ENCODE measurements at regions of chr13 and their contacts with region 1.

Region 1: GRCh38 chr13:99176309-99177276 is 24.1 kb upstream of the UBAC2 start:
- DNase-seq: peak; percentile 58
- ATAC-seq: peak; percentile 98
- H3K4me3 ChIP-seq: peak overlapping the region in 1 of 3 experiments; percentile 33; a peak in 1 of 6 replicates
- H3K27ac ChIP-seq: no peak overlapping the region
- H3K4me1 ChIP-seq: peaks cover 7% of the 10 kb centered on the region; the same call in 1 of the 2 replicates
- H3K27me3 ChIP-seq: peaks cover 0 to 10% of the 10 kb centered on the region in 2 experiments; a peak in 1 of 5 replicates
- CTCF ChIP-seq: peak; percentile 97
- EP300 ChIP-seq: no peak
- POLR2A ChIP-seq: no peak
- RAD21 ChIP-seq: peak; percentile 86

Region 2: DNA sequence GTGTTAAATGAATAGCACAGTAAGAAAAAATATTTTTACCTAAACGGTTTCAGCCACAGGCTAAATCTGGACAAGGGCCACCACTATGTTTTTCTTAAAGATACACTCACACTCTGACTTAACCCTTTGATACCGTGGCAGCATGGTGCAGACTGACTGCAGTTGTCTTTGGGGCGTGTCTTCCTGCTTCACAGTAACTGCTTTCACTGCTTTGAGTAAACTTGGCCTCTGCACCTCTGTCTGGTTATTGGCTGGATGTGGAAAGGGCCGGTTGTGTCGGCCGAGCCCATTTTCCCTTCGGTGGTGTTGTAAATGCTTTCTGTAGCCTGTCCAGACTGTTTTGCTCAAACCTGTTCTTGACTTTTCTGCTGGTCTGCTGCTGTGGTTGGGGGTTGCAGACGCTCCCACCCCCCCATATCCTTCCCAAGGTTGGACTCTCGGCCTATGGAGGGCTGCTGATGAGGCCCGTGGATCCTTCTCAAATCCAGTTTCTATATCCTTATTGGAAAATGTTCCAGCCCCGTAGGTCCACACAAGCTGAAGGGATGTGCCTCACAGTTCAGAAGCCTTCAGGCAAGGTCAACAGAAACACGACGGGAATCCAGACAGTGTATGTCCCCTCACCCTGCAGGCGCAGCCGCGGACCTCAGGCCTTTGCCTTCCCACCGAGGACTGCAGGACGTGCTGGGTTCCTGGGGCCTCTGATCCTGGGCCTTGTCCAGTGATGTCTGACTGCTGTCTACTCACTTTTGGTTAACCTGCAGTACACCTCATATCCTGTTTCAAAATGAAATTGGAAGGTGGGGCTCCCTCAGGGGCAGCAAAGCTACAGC is 909.3 kb before region 1 on chr13:
- CTCF ChIA-PET with region 1: no interaction called
- POLR2A ChIA-PET with region 1: no interaction called
- in situ Hi-C with region 1: no loop called
- intact Hi-C with region 1: no loop called
- DNase-seq: peak; percentile 94
- ATAC-seq: peak; percentile 76
- H3K4me3 ChIP-seq: peak overlapping the region; percentile 35 to 65 (median 41)
- H3K27ac ChIP-seq: peak overlapping the region; percentile 80
- H3K4me1 ChIP-seq: peaks cover 98% of the 10 kb centered on the region
- H3K27me3 ChIP-seq: no peaks in the 10 kb centered on the region
- CTCF ChIP-seq: no peak; the same call in 1 of the 2 replicates
- EP300 ChIP-seq: peak in 1 of 2 experiments; percentile 81; a peak in 2 of 4 replicates
- POLR2A ChIP-seq: peak; percentile 66 to 68
- RAD21 ChIP-seq: no peak

Region 3: GRCh38 chr13:99191879-99192399 is 15.3 kb after region 1 on chr13:
- CTCF ChIA-PET with region 1: no interaction called
- POLR2A ChIA-PET with region 1: no interaction called
- in situ Hi-C with region 1: no loop called
- intact Hi-C with region 1: no loop called
- DNase-seq: no peak
- ATAC-seq: peak; percentile 16; the same call in 2 of the 3 replicates
- H3K4me3 ChIP-seq: no peak overlapping the region
- H3K27ac ChIP-seq: no peak overlapping the region
- H3K4me1 ChIP-seq: peaks cover 23% of the 10 kb centered on the region; the same call in 1 of the 2 replicates
- H3K27me3 ChIP-seq: no peaks in the 10 kb centered on the region; a peak in 1 of 5 replicates
- CTCF ChIP-seq: no peak
- EP300 ChIP-seq: no peak
- POLR2A ChIP-seq: no peak
- RAD21 ChIP-seq: no peak

Region 4: GRCh38 chr13:99264051-99264450 is 87.5 kb after region 1 on chr13:
- CTCF ChIA-PET with region 1: interaction called, 22 read pairs
- POLR2A ChIA-PET with region 1: no interaction called
- in situ Hi-C with region 1: loop called (anchors 5 kb)
- intact Hi-C with region 1: loop called (anchors 1 kb)
- DNase-seq: no peak
- ATAC-seq: no peak
- H3K4me3 ChIP-seq: no peak overlapping the region
- H3K27ac ChIP-seq: no peak overlapping the region
- H3K4me1 ChIP-seq: peaks cover 30% of the 10 kb centered on the region
- H3K27me3 ChIP-seq: no peaks in the 10 kb centered on the region
- CTCF ChIP-seq: no peak
- EP300 ChIP-seq: no peak
- POLR2A ChIP-seq: no peak
- RAD21 ChIP-seq: no peak

Region 5: GRCh38 chr13:99269627-99270241 is 93.1 kb after region 1 on chr13:
- CTCF ChIA-PET with region 1: interaction called, 22 read pairs
- POLR2A ChIA-PET with region 1: no interaction called
- in situ Hi-C with region 1: loop called (anchors 5 kb)
- intact Hi-C with region 1: loop called (anchors 1 kb)
- DNase-seq: peak; percentile 25
- ATAC-seq: peak; percentile 71
- H3K4me3 ChIP-seq: no peak overlapping the region
- H3K27ac ChIP-seq: no peak overlapping the region
- H3K4me1 ChIP-seq: no peaks in the 10 kb centered on the region
- H3K27me3 ChIP-seq: no peaks in the 10 kb centered on the region
- CTCF ChIP-seq: peak; percentile 58
- EP300 ChIP-seq: no peak
- POLR2A ChIP-seq: no peak
- RAD21 ChIP-seq: no peak; the same call in 1 of the 2 replicates

Region 6: DNA sequence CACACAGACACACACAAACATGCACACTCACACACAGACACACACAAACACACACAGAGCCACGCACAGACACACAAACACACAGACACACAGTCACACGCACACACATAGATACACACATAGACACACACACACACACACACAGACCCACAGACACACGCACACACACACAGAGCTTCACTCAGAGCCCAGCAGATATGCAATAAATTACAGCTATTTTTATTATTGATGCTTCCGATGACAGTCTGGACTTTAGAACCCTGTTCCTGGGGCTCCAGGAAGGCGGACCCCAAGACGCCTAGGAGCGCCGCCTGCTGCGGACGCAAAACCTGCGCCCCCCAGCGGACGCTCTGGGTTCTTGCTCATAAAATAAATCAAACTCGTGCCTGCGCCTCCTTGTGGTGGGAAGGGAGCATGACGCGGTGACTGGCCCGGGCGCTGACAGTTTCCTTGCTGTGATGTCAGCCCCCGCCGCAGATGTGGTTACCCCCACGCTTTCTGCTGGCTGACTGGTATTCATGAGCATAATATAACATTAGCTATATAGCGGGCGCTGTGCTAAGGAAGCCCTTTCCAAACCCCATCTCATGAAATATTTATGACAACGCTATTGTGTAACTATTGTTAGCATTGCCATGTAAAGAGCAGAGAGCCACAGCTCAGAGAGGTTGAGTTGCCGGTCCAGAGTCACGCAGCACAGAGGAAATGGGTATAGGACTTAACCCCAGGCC is 260.3 kb after region 1 on chr13:
- CTCF ChIA-PET with region 1: interaction called, 70 read pairs
- POLR2A ChIA-PET with region 1: no interaction called
- in situ Hi-C with region 1: loop called (anchors 5 kb)
- intact Hi-C with region 1: loop called (anchors 1 kb)
- DNase-seq: peak; percentile 64
- ATAC-seq: peak; percentile 26
- H3K4me3 ChIP-seq: peak overlapping the region in 1 of 3 experiments; percentile 40; a peak in 2 of 6 replicates
- H3K27ac ChIP-seq: no peak overlapping the region
- H3K4me1 ChIP-seq: peaks cover 38% of the 10 kb centered on the region
- H3K27me3 ChIP-seq: peaks cover 0 to 18% of the 10 kb centered on the region in 2 experiments; a peak in 4 of 5 replicates
- CTCF ChIP-seq: peak; percentile 97
- EP300 ChIP-seq: no peak
- POLR2A ChIP-seq: no peak
- RAD21 ChIP-seq: peak; percentile 92

Measured in HepG2 (cell line).